ENCODE measurements at regions of chr18 and their contacts with region 1.

Region 1: GRCh38 chr18:45879681-45880655 is 54.5 kb downstream of the SIGLEC15 start:
- DNase-seq: peak; percentile 78
- H3K4me3 Mint-ChIP-seq: no peak overlapping the region
- H3K27ac Mint-ChIP-seq: no peak overlapping the region
- H3K4me1 Mint-ChIP-seq: peaks cover 15% of the 10 kb centered on the region
- H3K27me3 Mint-ChIP-seq: no peaks in the 10 kb centered on the region

Region 2: GRCh38 chr18:45621061-45621511 is 258.9 kb before region 1 on chr18:
- CTCF ChIA-PET with region 1: interaction called, 5 read pairs
- intact Hi-C with region 1: loop called (anchors 1 kb)
- DNase-seq: peak; percentile 51
- H3K4me3 Mint-ChIP-seq: no peak overlapping the region
- H3K27ac Mint-ChIP-seq: no peak overlapping the region
- H3K4me1 Mint-ChIP-seq: no peaks in the 10 kb centered on the region
- H3K27me3 Mint-ChIP-seq: no peaks in the 10 kb centered on the region

Region 3: GRCh38 chr18:45690975-45691815 is 188.8 kb before region 1 on chr18:
- CTCF ChIA-PET with region 1: interaction called, 77 read pairs
- intact Hi-C with region 1: loop called (anchors 1 kb)
- DNase-seq: peak; percentile 89
- H3K4me3 Mint-ChIP-seq: no peak overlapping the region
- H3K27ac Mint-ChIP-seq: no peak overlapping the region
- H3K4me1 Mint-ChIP-seq: peaks cover 36% of the 10 kb centered on the region
- H3K27me3 Mint-ChIP-seq: no peaks in the 10 kb centered on the region

Region 4: GRCh38 chr18:45839414-45840395 is 40.3 kb before region 1 on chr18:
- CTCF ChIA-PET with region 1: interaction called, 11 read pairs
- intact Hi-C with region 1: no loop called
- DNase-seq: peak; percentile 49
- H3K4me3 Mint-ChIP-seq: no peak overlapping the region
- H3K27ac Mint-ChIP-seq: no peak overlapping the region
- H3K4me1 Mint-ChIP-seq: peaks cover 11% of the 10 kb centered on the region
- H3K27me3 Mint-ChIP-seq: peaks cover 28% of the 10 kb centered on the region

Region 5: GRCh38 chr18:45856531-45856930 is 23.4 kb before region 1 on chr18:
- CTCF ChIA-PET with region 1: interaction called, 13 read pairs
- intact Hi-C with region 1: no loop called
- DNase-seq: no peak
- H3K4me3 Mint-ChIP-seq: no peak overlapping the region
- H3K27ac Mint-ChIP-seq: no peak overlapping the region
- H3K4me1 Mint-ChIP-seq: no peaks in the 10 kb centered on the region
- H3K27me3 Mint-ChIP-seq: no peaks in the 10 kb centered on the region

Region 6: DNA sequence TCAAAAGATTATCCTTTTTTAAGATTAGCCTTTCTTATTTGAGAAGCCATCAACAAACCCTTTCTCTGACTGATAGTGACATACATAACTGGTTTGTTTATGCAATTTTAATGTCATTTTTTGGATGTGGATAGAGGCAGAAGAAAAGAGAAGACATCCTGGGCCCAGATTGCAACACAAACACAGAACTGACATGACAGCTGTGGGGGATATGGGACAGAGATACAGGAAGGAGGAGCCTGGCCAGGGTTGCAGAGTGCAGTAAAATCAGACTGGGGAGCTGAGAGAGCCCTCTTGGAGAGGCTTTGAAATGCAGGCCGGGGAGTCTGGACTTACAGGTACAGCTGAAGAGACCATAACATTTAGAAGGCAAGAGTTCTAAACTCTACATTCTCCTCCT is 10.6 kb after region 1 on chr18:
- CTCF ChIA-PET with region 1: interaction called, 26 read pairs
- intact Hi-C with region 1: no loop called
- DNase-seq: no peak
- H3K4me3 Mint-ChIP-seq: no peak overlapping the region
- H3K27ac Mint-ChIP-seq: no peak overlapping the region
- H3K4me1 Mint-ChIP-seq: no peaks in the 10 kb centered on the region
- H3K27me3 Mint-ChIP-seq: no peaks in the 10 kb centered on the region

Region 7: DNA sequence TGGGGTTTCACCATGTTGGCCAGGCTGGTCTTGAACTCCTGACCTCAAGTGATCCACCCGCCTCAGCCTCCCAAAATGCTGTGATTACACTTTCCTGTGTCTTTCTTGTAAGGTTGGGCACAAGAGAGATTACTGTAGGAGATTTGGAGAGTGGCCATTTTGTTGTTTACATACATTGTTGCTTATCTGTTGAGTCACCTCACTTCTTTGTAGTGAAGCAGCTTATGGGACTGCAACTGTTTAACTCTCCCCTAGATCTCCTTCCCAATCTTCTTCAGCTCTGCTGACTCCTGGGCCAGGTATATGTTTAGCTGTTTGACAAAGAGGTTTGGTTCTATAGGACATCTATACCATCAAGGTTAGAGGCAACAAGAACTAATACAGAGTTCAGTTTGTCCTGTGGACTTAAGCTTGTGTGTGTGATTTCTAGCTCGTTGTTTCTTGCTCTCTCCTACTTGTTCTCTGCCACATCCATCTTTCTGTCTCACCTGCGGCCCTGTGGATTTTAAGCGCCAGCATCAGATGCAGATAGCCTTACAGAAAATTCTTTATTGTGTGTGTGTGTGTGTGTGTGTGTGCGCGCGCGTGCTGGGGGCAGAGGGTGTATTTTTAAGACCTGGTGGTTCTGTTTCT is 319.7 kb after region 1 on chr18:
- CTCF ChIA-PET with region 1: no interaction called
- intact Hi-C with region 1: loop called (anchors 10 kb)
- DNase-seq: no peak
- H3K4me3 Mint-ChIP-seq: no peak overlapping the region
- H3K27ac Mint-ChIP-seq: peak overlapping the region; percentile 0
- H3K4me1 Mint-ChIP-seq: peaks cover 67% of the 10 kb centered on the region
- H3K27me3 Mint-ChIP-seq: no peaks in the 10 kb centered on the region

Measured in activated naive CD4-positive, alpha-beta T cell treated with anti-CD3 and anti-CD28 coated beads for 36 hours (primary cell).